ENCODE measurements at regions of chr5 and their contacts with region 1.

Region 1: DNA sequence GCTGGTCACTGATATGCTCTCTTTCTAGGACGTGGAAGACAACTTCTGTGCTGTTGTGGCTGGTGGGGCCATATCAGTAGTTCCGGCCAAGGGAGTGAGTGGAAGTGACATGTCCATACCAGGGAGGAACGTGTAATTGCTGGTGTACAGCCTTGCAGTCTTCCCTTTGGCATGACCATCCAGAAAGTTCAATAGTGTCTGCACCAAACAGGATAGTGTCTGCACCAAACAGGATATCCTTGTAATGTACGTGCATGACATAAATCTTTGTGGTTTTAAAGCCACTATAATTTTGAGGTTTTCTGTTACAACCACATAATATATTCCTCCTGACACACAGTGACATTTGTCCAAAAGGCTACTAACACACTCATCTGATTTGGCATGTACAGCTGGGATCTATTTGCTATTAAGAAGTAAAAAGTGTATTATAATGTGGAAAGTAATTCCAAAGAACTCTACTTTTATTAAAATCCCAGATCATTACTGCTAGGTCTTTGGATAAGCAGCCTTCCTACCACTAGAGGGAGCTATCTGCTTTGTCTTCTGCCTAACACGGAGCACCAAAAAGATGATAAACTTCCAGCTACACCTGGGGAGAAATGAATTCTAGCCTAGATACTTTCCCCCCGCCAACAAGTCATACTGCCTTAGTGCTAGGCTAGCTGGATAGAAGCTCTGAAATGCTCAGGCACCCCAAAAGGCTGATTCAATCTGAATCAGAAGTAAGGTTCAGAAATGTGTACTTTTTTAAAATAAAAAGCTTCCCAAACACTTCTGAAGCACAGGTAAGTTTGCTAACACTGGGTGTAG is 52.7 kb downstream of the RNF145 start:
- DNase-seq: peak in 6 of 9 experiments; percentile 38 to 84 (median 47)
- ATAC-seq: peak; percentile 78
- H3K4me3 ChIP-seq: no peak overlapping the region
- H3K4me3 Mint-ChIP-seq: no peak overlapping the region
- H3K27ac ChIP-seq: peak overlapping the region in 1 of 2 experiments; percentile 38
- H3K27ac Mint-ChIP-seq: peak overlapping the region; percentile 89
- H3K4me1 ChIP-seq: peaks cover 11% of the 10 kb centered on the region
- H3K4me1 Mint-ChIP-seq: peaks cover 19% of the 10 kb centered on the region
- H3K27me3 ChIP-seq: no peaks in the 10 kb centered on the region
- H3K27me3 Mint-ChIP-seq: no peaks in the 10 kb centered on the region
- CTCF ChIP-seq: peak; percentile 86

Region 2: DNA sequence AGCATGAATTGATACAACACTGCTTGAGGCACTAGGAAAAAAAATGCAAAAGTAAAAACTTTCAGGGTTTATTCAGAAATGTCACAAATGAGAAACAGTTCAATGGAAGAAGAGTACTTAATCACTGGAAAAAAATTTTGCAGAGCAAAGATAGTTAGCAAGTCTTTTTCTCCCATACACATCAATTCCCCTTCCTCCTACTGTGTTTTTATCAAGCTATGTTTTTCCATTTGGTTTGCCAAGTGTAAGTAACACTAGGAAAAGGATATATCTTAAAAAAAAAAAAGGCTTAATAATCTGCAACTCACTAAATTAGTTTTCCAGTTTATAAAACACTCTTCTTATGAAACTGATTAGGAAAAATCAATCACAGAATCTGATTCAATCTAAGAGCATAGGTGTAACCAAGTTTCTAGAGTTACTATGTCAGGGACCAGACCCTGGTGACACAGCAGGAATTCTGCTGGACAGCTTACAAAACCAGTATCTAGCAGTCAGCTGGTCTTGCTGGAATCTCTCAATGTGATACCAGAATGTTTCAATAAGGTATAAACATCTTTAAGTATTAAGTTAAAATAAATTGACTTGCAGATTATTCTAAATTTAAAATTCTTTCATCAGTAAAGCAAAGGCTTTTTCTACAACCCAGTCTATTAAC is 18.0 kb after region 1 on chr5:
- CTCF ChIA-PET with region 1: interaction called, 14 read pairs
- POLR2A ChIA-PET with region 1: no interaction called
- intact Hi-C with region 1: no loop called
- DNase-seq: no peak
- ATAC-seq: no peak
- H3K4me3 ChIP-seq: no peak overlapping the region
- H3K4me3 Mint-ChIP-seq: no peak overlapping the region
- H3K27ac ChIP-seq: no peak overlapping the region
- H3K27ac Mint-ChIP-seq: no peak overlapping the region
- H3K4me1 ChIP-seq: peaks cover 15% of the 10 kb centered on the region
- H3K4me1 Mint-ChIP-seq: peaks cover 46% of the 10 kb centered on the region
- H3K27me3 ChIP-seq: no peaks in the 10 kb centered on the region
- H3K27me3 Mint-ChIP-seq: no peaks in the 10 kb centered on the region
- CTCF ChIP-seq: no peak

Region 3: GRCh38 chr5:159209438-159210305 is 53.0 kb after region 1 on chr5 and contains the start of gene RNF145:
- CTCF ChIA-PET with region 1: interaction called, 23 read pairs
- POLR2A ChIA-PET with region 1: interaction called, 5 read pairs
- intact Hi-C with region 1: loop called in 1 of 2 experiments (anchors 5 kb)
- DNase-seq: peak; percentile 86 to 97 (median 93)
- ATAC-seq: peak; percentile 75
- H3K4me3 ChIP-seq: peak within 1 kb of the TSS; percentile 87 to 92
- H3K4me3 Mint-ChIP-seq: peak within 1 kb of the TSS; percentile 95
- H3K27ac ChIP-seq: peak within 1 kb of the TSS; percentile 83 to 85
- H3K27ac Mint-ChIP-seq: peak within 1 kb of the TSS; percentile 98
- H3K4me1 ChIP-seq: peaks cover 33% of the 10 kb centered on the region
- H3K4me1 Mint-ChIP-seq: peaks cover 45% of the 10 kb centered on the region
- H3K27me3 ChIP-seq: no peaks in the 10 kb centered on the region
- H3K27me3 Mint-ChIP-seq: no peaks in the 10 kb centered on the region
- CTCF ChIP-seq: no peak
- total RNA-seq, gene RNF145: 62.0 to 72.8 TPM

Region 4: GRCh38 chr5:159274676-159275075 is 118.0 kb after region 1 on chr5:
- CTCF ChIA-PET with region 1: interaction called, 11 read pairs
- POLR2A ChIA-PET with region 1: no interaction called
- intact Hi-C with region 1: no loop called
- DNase-seq: no peak
- ATAC-seq: no peak
- H3K4me3 ChIP-seq: no peak overlapping the region
- H3K4me3 Mint-ChIP-seq: no peak overlapping the region
- H3K27ac ChIP-seq: no peak overlapping the region
- H3K27ac Mint-ChIP-seq: no peak overlapping the region
- H3K4me1 ChIP-seq: no peaks in the 10 kb centered on the region
- H3K4me1 Mint-ChIP-seq: peaks cover 26% of the 10 kb centered on the region
- H3K27me3 ChIP-seq: no peaks in the 10 kb centered on the region
- H3K27me3 Mint-ChIP-seq: no peaks in the 10 kb centered on the region
- CTCF ChIP-seq: no peak

Region 5: GRCh38 chr5:159310511-159310910 is 153.9 kb after region 1 on chr5:
- CTCF ChIA-PET with region 1: interaction called, 142 read pairs
- POLR2A ChIA-PET with region 1: no interaction called
- intact Hi-C with region 1: no loop called
- DNase-seq: peak in 7 of 9 experiments; percentile 3 to 51 (median 25)
- ATAC-seq: peak; percentile 70
- H3K4me3 ChIP-seq: peak overlapping the region in 1 of 2 experiments; percentile 30
- H3K4me3 Mint-ChIP-seq: peak overlapping the region; percentile 54
- H3K27ac ChIP-seq: no peak overlapping the region
- H3K27ac Mint-ChIP-seq: no peak overlapping the region
- H3K4me1 ChIP-seq: no peaks in the 10 kb centered on the region
- H3K4me1 Mint-ChIP-seq: peaks cover 6% of the 10 kb centered on the region
- H3K27me3 ChIP-seq: peaks cover 0 to 3% of the 10 kb centered on the region in 2 experiments
- H3K27me3 Mint-ChIP-seq: peaks cover 18% of the 10 kb centered on the region
- CTCF ChIP-seq: no peak

Region 6: GRCh38 chr5:159412284-159413046 is 255.8 kb after region 1 on chr5:
- CTCF ChIA-PET with region 1: interaction called, 4 read pairs
- POLR2A ChIA-PET with region 1: interaction called, 3 read pairs
- intact Hi-C with region 1: loop called in 1 of 2 experiments (anchors 5 kb)
- DNase-seq: peak; percentile 49 to 94 (median 65)
- ATAC-seq: peak; percentile 90
- H3K4me3 ChIP-seq: no peak overlapping the region
- H3K4me3 Mint-ChIP-seq: peak overlapping the region; percentile 9
- H3K27ac ChIP-seq: peak overlapping the region; percentile 13 to 47
- H3K27ac Mint-ChIP-seq: peak overlapping the region; percentile 68
- H3K4me1 ChIP-seq: peaks cover 26% of the 10 kb centered on the region
- H3K4me1 Mint-ChIP-seq: peaks cover 40% of the 10 kb centered on the region
- H3K27me3 ChIP-seq: no peaks in the 10 kb centered on the region
- H3K27me3 Mint-ChIP-seq: no peaks in the 10 kb centered on the region
- CTCF ChIP-seq: no peak

Region 7: GRCh38 chr5:159987031-159987674 is 830.5 kb after region 1 on chr5:
- CTCF ChIA-PET with region 1: interaction called, 26 read pairs
- POLR2A ChIA-PET with region 1: no interaction called
- intact Hi-C with region 1: loop called (anchors 1 to 5 kb)
- DNase-seq: peak; percentile 47 to 85 (median 75)
- ATAC-seq: peak; percentile 93
- H3K4me3 ChIP-seq: peak overlapping the region; percentile 34 to 58
- H3K4me3 Mint-ChIP-seq: peak overlapping the region; percentile 75
- H3K27ac ChIP-seq: no peak overlapping the region
- H3K27ac Mint-ChIP-seq: no peak overlapping the region
- H3K4me1 ChIP-seq: no peaks in the 10 kb centered on the region
- H3K4me1 Mint-ChIP-seq: no peaks in the 10 kb centered on the region
- H3K27me3 ChIP-seq: peaks cover 0 to 8% of the 10 kb centered on the region in 2 experiments
- H3K27me3 Mint-ChIP-seq: peaks cover 31% of the 10 kb centered on the region
- CTCF ChIP-seq: peak; percentile 56